ENCODE measurements at regions of chr17 and their contacts with region 1.

Region 1: DNA sequence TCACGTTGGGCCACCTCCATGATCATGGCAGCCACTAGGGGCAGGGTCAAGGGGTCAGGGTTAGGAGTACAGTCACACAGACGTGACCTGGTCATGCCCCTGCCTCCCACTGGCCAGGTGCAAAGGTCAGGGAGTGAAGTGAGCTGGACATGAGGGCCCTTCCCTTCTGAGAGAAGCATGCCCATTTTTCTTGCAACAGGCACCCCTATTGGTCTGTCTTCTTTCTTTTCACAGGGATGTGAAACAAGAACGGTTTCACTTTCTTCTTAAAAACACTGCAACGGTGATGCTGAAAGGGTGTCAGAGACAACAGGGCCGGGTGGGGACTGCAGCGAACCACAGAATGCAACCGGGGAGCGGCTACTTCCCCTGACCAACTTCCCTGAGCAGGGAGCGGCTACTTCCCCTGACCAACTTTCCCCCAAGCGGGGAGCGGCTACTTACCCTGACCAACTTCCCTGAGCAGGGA is 52.1 kb upstream of the DOC2B start:
- DNase-seq: peak; percentile 53
- ATAC-seq: peak; percentile 77
- H3K4me3 ChIP-seq: no peak overlapping the region
- H3K27ac ChIP-seq: no peak overlapping the region
- H3K4me1 ChIP-seq: peaks cover 24% of the 10 kb centered on the region
- H3K27me3 ChIP-seq: no peaks in the 10 kb centered on the region
- CTCF ChIP-seq: peak; percentile 30; the same call in 1 of the 2 replicates
- EP300 ChIP-seq: peak in 1 of 2 experiments; percentile 61; a peak in 2 of 4 replicates
- POLR2A ChIP-seq: no peak
- RAD21 ChIP-seq: no peak

Region 2: GRCh38 chr17:143782-144281 is 89.7 kb before region 1 on chr17:
- CTCF ChIA-PET with region 1: no interaction called
- POLR2A ChIA-PET with region 1: no interaction called
- in situ Hi-C with region 1: no loop called
- intact Hi-C with region 1: no loop called
- DNase-seq: peak; percentile 48
- ATAC-seq: peak; percentile 72
- H3K4me3 ChIP-seq: no peak overlapping the region; a peak in 1 of 6 replicates
- H3K27ac ChIP-seq: no peak overlapping the region
- H3K4me1 ChIP-seq: peaks cover 23% of the 10 kb centered on the region
- H3K27me3 ChIP-seq: peaks cover 2 to 30% of the 10 kb centered on the region in 2 experiments; a peak in 3 of 5 replicates
- CTCF ChIP-seq: peak; percentile 91
- EP300 ChIP-seq: no peak
- POLR2A ChIP-seq: no peak
- RAD21 ChIP-seq: peak; percentile 89

Region 3: DNA sequence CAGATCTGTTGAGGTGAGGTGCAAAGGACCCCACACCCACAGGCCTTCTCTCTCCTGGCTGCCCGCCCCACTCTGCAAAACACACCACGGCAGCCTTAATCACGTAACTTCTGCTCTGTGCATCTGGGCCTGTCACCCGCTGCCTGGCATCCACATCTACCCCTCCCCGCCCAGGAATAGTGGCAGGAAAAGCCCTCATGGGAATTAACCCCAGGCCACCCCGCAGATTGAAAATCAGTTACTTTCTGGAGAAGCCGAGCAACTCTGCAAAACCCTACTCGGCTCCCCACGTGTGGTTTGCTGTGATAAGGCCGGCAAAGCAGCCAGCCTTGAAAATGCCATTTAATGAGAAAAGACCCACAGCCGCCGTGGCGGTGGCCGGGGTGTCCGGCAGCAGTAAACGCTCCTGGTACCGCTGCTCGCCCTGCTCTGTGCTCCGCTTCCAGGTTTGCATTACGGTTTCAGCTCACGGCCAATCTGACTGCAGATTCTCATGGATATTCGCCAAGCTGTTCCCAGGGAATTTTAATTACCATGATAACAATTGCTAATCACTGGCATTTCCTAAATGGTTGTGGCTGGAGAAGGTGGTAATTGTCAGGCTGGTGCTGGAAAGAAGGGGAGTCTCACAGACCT is 26.0 kb after region 1 on chr17:
- CTCF ChIA-PET with region 1: no interaction called
- POLR2A ChIA-PET with region 1: no interaction called
- in situ Hi-C with region 1: no loop called
- intact Hi-C with region 1: no loop called
- DNase-seq: no peak
- ATAC-seq: no peak
- H3K4me3 ChIP-seq: no peak overlapping the region
- H3K27ac ChIP-seq: no peak overlapping the region
- H3K4me1 ChIP-seq: no peaks in the 10 kb centered on the region
- H3K27me3 ChIP-seq: no peaks in the 10 kb centered on the region
- CTCF ChIP-seq: no peak
- EP300 ChIP-seq: no peak
- POLR2A ChIP-seq: no peak
- RAD21 ChIP-seq: no peak

Region 4: GRCh38 chr17:298791-299450 is 65.4 kb after region 1 on chr17:
- CTCF ChIA-PET with region 1: no interaction called
- POLR2A ChIA-PET with region 1: no interaction called
- in situ Hi-C with region 1: loop called (anchors 10 kb)
- intact Hi-C with region 1: no loop called
- DNase-seq: no peak
- ATAC-seq: no peak
- H3K4me3 ChIP-seq: no peak overlapping the region
- H3K27ac ChIP-seq: no peak overlapping the region
- H3K4me1 ChIP-seq: no peaks in the 10 kb centered on the region
- H3K27me3 ChIP-seq: no peaks in the 10 kb centered on the region
- CTCF ChIP-seq: no peak
- EP300 ChIP-seq: no peak
- POLR2A ChIP-seq: no peak
- RAD21 ChIP-seq: no peak

Measured in HepG2 (cell line).